Naive thymus-derived CD4-positive, alpha-beta T cell (primary cell): ENCODE measurements at regions of chr17 and their contacts with region 1.

Region 1: GRCh38 chr17:18183334-18184142 is at the start of gene ALKBH5:
- DNase-seq: peak; percentile 97 to 99 (median 99)
- ATAC-seq: peak; percentile 88
- H3K4me3 ChIP-seq: peak within 1 kb of the TSS; percentile 78
- H3K4me3 Mint-ChIP-seq: peak within 1 kb of the TSS; percentile 83 to 99 (median 94)
- H3K27ac ChIP-seq: peak within 1 kb of the TSS; percentile 93
- H3K27ac Mint-ChIP-seq: peak within 1 kb of the TSS; percentile 96 to 99 (median 98)
- H3K4me1 ChIP-seq: peaks cover 36 to 40% of the 10 kb centered on the region in 2 donors
- H3K4me1 Mint-ChIP-seq: peaks cover 40 to 59% (median 46%) of the 10 kb centered on the region in 7 donors
- H3K27me3 ChIP-seq: no peaks in the 10 kb centered on the region
- H3K27me3 Mint-ChIP-seq: peaks cover 0 to 3% (median 0%) of the 10 kb centered on the region in 5 donors
- total RNA-seq, gene ALKBH5: 97.4 to 135 (median 108) TPM

Region 2: GRCh38 chr17:17836250-17836817 is 347.2 kb before region 1 on chr17:
- CTCF ChIA-PET with region 1: no interaction called
- POLR2A ChIA-PET with region 1: no interaction called
- intact Hi-C with region 1: loop called in 1 of 2 experiments (anchors 1 kb)
- DNase-seq: peak; percentile 93 to 99 (median 97)
- ATAC-seq: peak; percentile 85
- H3K4me3 ChIP-seq: peak overlapping the region; percentile 86
- H3K4me3 Mint-ChIP-seq: peak overlapping the region; percentile 85 to 95 (median 90)
- H3K27ac ChIP-seq: peak overlapping the region; percentile 99
- H3K27ac Mint-ChIP-seq: peak overlapping the region; percentile 94 to 99 (median 98)
- H3K4me1 ChIP-seq: peaks cover 18 to 60% of the 10 kb centered on the region in 2 donors
- H3K4me1 Mint-ChIP-seq: peaks cover 46 to 79% (median 75%) of the 10 kb centered on the region in 7 donors
- H3K27me3 ChIP-seq: no peaks in the 10 kb centered on the region
- H3K27me3 Mint-ChIP-seq: no peaks in the 10 kb centered on the region

Region 3: DNA sequence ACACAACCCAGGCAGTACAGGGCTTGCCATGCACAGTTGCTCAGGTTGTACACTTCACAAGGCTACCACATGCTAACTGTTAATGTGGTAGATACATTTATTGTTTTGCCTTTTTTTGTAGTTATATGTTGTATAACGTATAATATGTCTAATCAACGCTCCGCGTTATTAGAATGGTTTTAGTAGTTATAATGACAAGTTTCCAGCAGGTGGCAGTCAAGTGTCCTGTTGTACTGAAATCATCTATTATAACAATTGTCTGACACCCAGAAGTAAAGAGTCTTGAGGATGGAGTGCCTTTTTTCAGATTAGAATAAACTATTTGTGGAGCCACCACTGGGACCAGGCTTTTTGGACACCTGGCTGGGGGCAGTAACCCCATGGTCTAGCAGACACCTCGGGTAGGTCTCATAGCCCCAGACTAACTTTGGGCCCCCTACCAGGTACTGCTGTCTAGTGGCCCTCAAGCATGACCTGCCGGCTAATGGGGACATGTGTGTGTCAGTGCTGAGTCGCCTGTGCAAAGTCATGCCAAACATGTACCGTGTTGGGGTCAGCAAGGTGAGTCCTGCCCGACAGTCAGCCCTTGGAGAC is 42.2 kb before region 1 on chr17:
- CTCF ChIA-PET with region 1: no interaction called
- POLR2A ChIA-PET with region 1: interaction called, 7 read pairs
- intact Hi-C with region 1: loop called (anchors 1 kb)
- DNase-seq: peak in 7 of 9 donors; percentile 30 to 66 (median 61)
- ATAC-seq: peak; percentile 81
- H3K4me3 ChIP-seq: no peak overlapping the region
- H3K4me3 Mint-ChIP-seq: no peak overlapping the region
- H3K27ac ChIP-seq: no peak overlapping the region
- H3K27ac Mint-ChIP-seq: peak overlapping the region in 2 of 9 donors; percentile 7 to 19
- H3K4me1 ChIP-seq: peaks cover 0 to 4% of the 10 kb centered on the region in 2 donors
- H3K4me1 Mint-ChIP-seq: peaks cover 0 to 5% (median 4%) of the 10 kb centered on the region in 7 donors
- H3K27me3 ChIP-seq: no peaks in the 10 kb centered on the region
- H3K27me3 Mint-ChIP-seq: no peaks in the 10 kb centered on the region

Region 4: GRCh38 chr17:18225121-18225566 is 41.6 kb after region 1 on chr17:
- CTCF ChIA-PET with region 1: no interaction called
- POLR2A ChIA-PET with region 1: interaction called, 8 read pairs
- intact Hi-C with region 1: loop called (anchors 1 kb)
- DNase-seq: peak; percentile 92 to 98 (median 94)
- ATAC-seq: peak; percentile 99
- H3K4me3 ChIP-seq: peak overlapping the region; percentile 46
- H3K4me3 Mint-ChIP-seq: peak overlapping the region; percentile 54 to 94 (median 68)
- H3K27ac ChIP-seq: peak overlapping the region; percentile 34
- H3K27ac Mint-ChIP-seq: peak overlapping the region in 4 of 9 donors; percentile 64 to 80 (median 77)
- H3K4me1 ChIP-seq: peaks cover 7 to 13% of the 10 kb centered on the region in 2 donors
- H3K4me1 Mint-ChIP-seq: peaks cover 24 to 30% (median 27%) of the 10 kb centered on the region in 7 donors
- H3K27me3 ChIP-seq: no peaks in the 10 kb centered on the region
- H3K27me3 Mint-ChIP-seq: no peaks in the 10 kb centered on the region

Region 5: GRCh38 chr17:18235743-18236256 is 52.3 kb after region 1 on chr17:
- CTCF ChIA-PET with region 1: no interaction called
- POLR2A ChIA-PET with region 1: no interaction called
- intact Hi-C with region 1: no loop called
- DNase-seq: peak in 1 of 9 donors; percentile 40
- ATAC-seq: no peak
- H3K4me3 ChIP-seq: no peak overlapping the region
- H3K4me3 Mint-ChIP-seq: no peak overlapping the region
- H3K27ac ChIP-seq: no peak overlapping the region
- H3K27ac Mint-ChIP-seq: no peak overlapping the region
- H3K4me1 ChIP-seq: no peaks in the 10 kb centered on the region
- H3K4me1 Mint-ChIP-seq: peaks cover 0 to 4% (median 0%) of the 10 kb centered on the region in 7 donors
- H3K27me3 ChIP-seq: no peaks in the 10 kb centered on the region
- H3K27me3 Mint-ChIP-seq: no peaks in the 10 kb centered on the region

Region 6: DNA sequence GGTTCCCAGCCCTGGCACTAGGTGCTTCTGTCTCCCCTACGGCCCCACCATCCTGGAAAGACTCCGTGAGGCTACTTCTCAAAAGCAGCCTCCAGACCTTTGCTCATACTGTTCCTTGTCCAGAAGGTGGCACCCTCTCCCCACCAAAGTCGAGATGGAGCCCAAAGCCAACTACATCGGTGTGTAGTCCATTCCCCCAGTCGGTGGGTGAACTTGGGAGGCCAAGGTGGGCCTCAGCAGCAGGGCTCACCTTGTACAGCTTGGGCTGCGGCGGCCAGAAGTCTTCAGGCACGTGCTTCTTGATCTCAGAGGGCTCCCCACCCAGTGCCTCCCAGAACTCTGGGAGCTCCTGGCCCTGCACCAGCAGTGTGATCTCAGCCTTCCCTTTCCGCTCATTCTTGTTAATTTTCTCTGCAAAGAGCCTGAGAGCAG is 64.8 kb after region 1 on chr17:
- CTCF ChIA-PET with region 1: no interaction called
- POLR2A ChIA-PET with region 1: no interaction called
- intact Hi-C with region 1: no loop called
- DNase-seq: peak; percentile 47 to 75 (median 64)
- ATAC-seq: peak; percentile 84
- H3K4me3 ChIP-seq: no peak overlapping the region
- H3K4me3 Mint-ChIP-seq: no peak overlapping the region
- H3K27ac ChIP-seq: no peak overlapping the region
- H3K27ac Mint-ChIP-seq: peak overlapping the region in 7 of 9 donors; percentile 14 to 88 (median 62)
- H3K4me1 ChIP-seq: no peaks in the 10 kb centered on the region
- H3K4me1 Mint-ChIP-seq: peaks cover 0 to 8% (median 4%) of the 10 kb centered on the region in 7 donors
- H3K27me3 ChIP-seq: no peaks in the 10 kb centered on the region
- H3K27me3 Mint-ChIP-seq: no peaks in the 10 kb centered on the region

Region 7: GRCh38 chr17:18300725-18301480 is 117.4 kb after region 1 on chr17:
- CTCF ChIA-PET with region 1: no interaction called
- POLR2A ChIA-PET with region 1: no interaction called
- intact Hi-C with region 1: no loop called
- DNase-seq: no peak
- ATAC-seq: peak; percentile 58
- H3K4me3 ChIP-seq: no peak overlapping the region
- H3K4me3 Mint-ChIP-seq: no peak overlapping the region
- H3K27ac ChIP-seq: no peak overlapping the region
- H3K27ac Mint-ChIP-seq: peak overlapping the region in 1 of 9 donors; percentile 39
- H3K4me1 ChIP-seq: no peaks in the 10 kb centered on the region
- H3K4me1 Mint-ChIP-seq: peaks cover 0 to 3% (median 0%) of the 10 kb centered on the region in 7 donors
- H3K27me3 ChIP-seq: no peaks in the 10 kb centered on the region
- H3K27me3 Mint-ChIP-seq: no peaks in the 10 kb centered on the region

Region 8: GRCh38 chr17:19377602-19378392 is 1194.3 kb after region 1 on chr17:
- CTCF ChIA-PET with region 1: no interaction called
- POLR2A ChIA-PET with region 1: no interaction called
- intact Hi-C with region 1: loop called in 1 of 2 experiments (anchors 5 kb)
- DNase-seq: peak; percentile 85 to 95 (median 92)
- ATAC-seq: peak; percentile 89
- H3K4me3 ChIP-seq: peak overlapping the region; percentile 99
- H3K4me3 Mint-ChIP-seq: peak overlapping the region; percentile 83 to 100 (median 97)
- H3K27ac ChIP-seq: peak overlapping the region; percentile 81
- H3K27ac Mint-ChIP-seq: peak overlapping the region; percentile 83 to 99 (median 97)
- H3K4me1 ChIP-seq: peaks cover 2 to 6% of the 10 kb centered on the region in 2 donors
- H3K4me1 Mint-ChIP-seq: peaks cover 6 to 29% (median 20%) of the 10 kb centered on the region in 7 donors
- H3K27me3 ChIP-seq: no peaks in the 10 kb centered on the region
- H3K27me3 Mint-ChIP-seq: no peaks in the 10 kb centered on the region